ENCODE measurements at regions of chr4 and their contacts with region 1.

Region 1: DNA sequence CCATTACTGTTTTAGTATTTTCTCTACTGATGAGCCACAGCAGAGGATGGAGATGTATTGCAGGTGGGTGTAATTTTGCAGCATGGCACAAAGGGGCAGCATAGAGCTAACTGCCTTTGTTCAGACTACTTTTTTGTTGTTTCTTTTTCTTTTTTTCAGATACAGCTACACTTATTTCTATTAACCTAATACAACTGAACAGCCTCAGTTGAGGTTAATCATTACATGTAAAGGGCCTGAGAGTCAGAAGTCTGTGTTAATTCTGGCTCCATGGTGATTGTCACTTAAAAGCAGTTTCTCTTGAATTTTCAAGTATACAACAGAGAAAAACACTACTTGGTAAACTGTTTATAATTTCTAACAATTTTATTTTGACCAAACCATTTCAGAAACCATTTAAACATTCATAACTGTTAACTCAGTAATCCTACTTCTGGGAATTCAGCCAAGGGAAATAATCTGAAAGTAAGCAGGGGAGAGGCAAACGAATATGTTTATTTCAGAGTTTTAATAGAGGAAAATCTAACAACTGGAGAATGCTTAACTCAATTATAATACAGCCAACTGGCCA is 13.9 kb upstream of the PPEF2 start:
- DNase-seq: peak; percentile 57
- H3K4me3 ChIP-seq: no peak overlapping the region
- H3K27ac ChIP-seq: peak overlapping the region; percentile 12
- H3K27me3 ChIP-seq: no peaks in the 10 kb centered on the region
- CTCF ChIP-seq: peak; percentile 91

Region 2: DNA sequence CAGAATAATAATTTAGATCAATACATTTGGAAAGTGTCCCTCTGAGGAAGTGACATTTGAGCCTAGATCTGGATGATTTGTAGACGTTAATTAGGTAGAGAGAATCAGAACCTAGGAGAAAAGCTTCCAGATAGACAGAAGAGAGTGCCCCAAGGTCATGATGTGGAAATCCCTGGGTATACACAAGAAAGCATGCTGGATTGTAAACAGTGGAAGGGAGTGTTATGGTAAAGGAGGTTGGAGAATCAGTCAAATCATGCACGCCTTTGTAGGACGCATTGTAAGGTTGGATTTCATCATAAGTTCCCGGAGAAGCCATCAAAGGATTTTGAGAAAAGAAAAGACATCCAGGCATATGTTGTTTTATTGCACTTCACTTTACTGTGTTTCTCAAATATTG is 827.0 kb before region 1 on chr4:
- CTCF ChIA-PET with region 1: no interaction called
- POLR2A ChIA-PET with region 1: no interaction called
- DNase-seq: no peak
- H3K4me3 ChIP-seq: no peak overlapping the region
- H3K27ac ChIP-seq: no peak overlapping the region
- H3K27me3 ChIP-seq: no peaks in the 10 kb centered on the region
- CTCF ChIP-seq: no peak

Region 3: DNA sequence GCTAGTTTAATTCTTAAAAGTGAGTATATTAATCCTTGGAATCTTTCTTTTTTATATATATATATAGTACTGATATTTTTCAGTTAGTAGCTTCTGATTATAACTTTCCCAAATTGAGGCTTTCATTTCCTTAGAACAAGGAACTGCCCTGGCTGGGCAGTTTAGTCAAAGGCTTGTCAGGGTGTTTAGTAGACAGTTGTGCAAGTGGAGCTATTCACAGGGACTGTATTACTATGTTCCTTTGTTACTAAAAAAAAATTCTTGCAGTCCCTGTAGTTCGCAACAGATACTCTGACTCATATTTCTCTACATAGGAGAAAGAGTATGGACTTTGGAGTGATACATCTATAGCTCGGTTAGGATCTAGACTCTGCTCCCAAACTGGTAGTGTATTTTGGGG is 171.0 kb before region 1 on chr4:
- CTCF ChIA-PET with region 1: no interaction called
- POLR2A ChIA-PET with region 1: no interaction called
- DNase-seq: peak; percentile 29
- H3K4me3 ChIP-seq: no peak overlapping the region
- H3K27ac ChIP-seq: no peak overlapping the region
- H3K27me3 ChIP-seq: no peaks in the 10 kb centered on the region
- CTCF ChIP-seq: no peak

Region 4: DNA sequence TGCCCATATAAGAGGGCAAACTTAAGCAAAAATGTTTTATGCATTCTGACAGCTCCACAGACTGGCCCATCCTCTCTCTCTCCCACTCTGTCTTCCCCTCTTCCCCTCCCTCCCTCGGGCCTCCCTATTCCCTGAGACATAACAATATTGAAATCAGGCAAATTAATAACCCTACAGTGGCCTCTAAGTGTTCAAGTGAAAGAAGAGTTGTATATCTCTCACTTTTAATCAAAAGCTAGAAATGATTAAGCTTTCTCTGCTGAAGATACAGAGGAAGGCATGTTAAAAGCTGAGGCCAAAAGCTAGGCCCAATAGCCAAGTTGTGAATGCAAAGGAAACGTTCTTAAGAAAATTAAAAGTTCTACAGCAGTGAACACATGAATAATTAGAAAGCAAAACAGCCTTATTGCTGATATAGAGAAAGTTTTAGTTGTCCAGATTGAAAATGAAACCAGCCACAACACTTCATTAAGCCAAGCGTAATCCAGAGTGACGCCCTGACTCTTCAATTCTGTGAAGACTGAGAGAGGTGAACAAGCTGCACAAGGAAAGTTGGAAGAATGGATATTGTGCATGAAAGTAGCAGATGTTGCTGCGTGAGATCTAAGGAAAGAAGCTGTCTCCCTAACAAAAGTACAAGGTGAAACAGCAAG is 136.9 kb before region 1 on chr4:
- CTCF ChIA-PET with region 1: no interaction called
- POLR2A ChIA-PET with region 1: interaction called, 10 read pairs
- DNase-seq: no peak
- H3K4me3 ChIP-seq: no peak overlapping the region
- H3K27ac ChIP-seq: no peak overlapping the region
- H3K27me3 ChIP-seq: no peaks in the 10 kb centered on the region
- CTCF ChIP-seq: no peak

Region 5: DNA sequence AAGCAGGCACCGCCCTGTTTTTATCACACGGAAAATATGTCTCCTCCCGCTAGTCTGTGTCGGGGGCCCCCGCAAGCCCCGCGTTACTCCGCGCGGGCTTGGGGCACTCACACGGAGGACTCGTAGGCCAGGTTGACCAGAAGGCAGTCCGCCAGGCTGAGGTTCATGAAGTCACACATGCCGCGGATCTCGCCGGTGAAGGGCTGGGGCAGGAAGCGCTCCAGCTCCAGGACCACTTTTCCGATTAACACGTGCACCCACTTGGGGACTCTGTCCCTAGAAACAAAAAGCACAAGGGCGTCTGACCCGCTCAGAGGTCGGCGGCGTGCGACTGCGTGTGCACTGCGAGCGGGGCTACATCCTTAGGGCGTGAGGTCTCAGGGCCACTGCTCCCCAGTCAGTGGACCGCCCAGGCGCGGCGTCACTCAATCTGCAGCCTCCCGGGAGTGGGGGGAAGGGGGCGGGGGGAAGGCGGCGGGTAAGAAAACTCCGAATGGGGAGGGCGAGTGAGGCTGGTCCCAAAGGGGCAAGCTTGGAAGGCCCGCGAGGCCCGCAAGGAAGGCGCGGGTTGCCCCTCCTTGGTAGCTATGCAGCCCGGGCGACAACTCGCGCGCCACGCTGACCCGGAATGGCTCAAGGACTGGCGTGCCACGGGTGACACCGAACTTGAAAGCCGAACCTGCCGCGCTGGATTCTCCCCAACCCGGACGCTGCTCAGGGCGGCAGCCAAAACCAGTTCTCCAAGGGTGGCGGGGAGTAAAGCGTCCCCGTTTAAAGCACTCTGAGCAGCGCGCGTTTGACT is 23.9 kb after region 1 on chr4:
- CTCF ChIA-PET with region 1: interaction called, 14 read pairs
- POLR2A ChIA-PET with region 1: no interaction called
- DNase-seq: no peak
- H3K4me3 ChIP-seq: peak overlapping the region; percentile 75
- H3K27ac ChIP-seq: peak overlapping the region; percentile 21
- H3K27me3 ChIP-seq: no peaks in the 10 kb centered on the region
- CTCF ChIP-seq: no peak

Region 6: DNA sequence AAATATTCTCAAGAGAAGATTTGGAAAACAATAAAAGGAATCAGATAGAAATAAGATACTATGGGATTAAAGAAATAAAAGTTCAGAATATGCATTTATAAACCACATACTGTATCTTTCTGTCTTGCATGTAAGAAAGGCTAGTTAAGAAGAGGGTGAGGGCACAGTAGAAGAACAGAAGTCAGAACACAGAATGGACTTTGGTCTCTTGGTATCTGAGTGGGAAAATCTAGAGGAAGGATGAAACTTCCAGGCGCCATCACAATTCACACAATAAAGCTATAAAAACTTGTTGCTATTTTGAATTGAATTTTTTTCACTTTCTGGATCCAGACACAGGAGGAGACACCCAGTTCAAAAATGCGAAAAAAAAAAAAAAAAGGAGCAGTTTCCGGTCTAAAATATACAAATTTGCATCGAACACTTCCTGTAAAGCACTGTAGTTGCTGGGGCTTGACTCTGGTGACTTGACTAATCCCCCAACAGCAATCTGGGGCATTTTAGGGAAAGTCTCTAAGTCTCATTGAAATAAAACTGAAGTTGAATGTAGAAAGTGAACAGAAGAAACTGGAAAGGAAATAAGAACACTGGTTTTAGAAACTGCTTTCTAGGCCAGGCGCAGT is 32.8 kb after region 1 on chr4:
- CTCF ChIA-PET with region 1: interaction called, 11 read pairs
- POLR2A ChIA-PET with region 1: no interaction called
- DNase-seq: no peak
- H3K4me3 ChIP-seq: no peak overlapping the region
- H3K27ac ChIP-seq: no peak overlapping the region
- H3K27me3 ChIP-seq: no peaks in the 10 kb centered on the region
- CTCF ChIP-seq: no peak

Region 7: DNA sequence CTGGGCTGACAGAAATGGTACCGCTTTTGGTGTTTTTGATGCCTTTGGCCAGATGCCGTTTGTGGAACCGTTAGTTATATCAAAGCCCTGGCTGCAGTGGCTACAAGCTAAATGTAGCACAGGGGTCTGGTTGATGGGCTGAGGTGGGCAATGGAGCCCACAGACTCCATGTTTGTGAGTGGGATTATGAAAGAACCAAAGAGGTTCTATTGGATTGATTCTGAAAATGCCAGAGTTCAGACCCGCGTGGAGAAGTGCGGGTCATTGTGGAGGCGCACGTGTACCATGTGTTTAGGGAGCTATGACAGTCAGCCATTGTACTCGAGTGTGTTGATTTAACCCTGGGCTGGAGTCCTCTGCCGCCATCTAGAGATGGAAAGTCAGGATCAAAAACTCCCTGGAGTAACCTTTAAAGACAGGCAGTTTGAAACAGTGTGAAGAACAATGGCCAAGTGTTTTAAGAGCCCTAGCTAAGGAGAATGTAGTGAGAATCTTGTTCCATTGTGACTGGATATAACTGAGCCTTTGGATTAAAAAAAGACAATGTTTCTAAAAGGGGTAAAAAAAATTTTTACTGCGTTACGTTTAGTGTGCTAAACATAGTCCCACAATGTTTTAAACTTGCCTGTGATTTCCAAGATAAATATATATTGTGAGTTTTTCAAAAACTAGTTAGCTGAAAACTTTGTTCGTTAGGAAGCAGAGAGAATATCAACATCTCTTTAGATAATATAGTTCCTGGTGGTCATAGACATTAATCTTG is 171.0 kb after region 1 on chr4:
- CTCF ChIA-PET with region 1: interaction called, 12 read pairs
- POLR2A ChIA-PET with region 1: no interaction called
- DNase-seq: peak; percentile 7
- H3K4me3 ChIP-seq: no peak overlapping the region
- H3K27ac ChIP-seq: no peak overlapping the region
- H3K27me3 ChIP-seq: peaks cover 14% of the 10 kb centered on the region
- CTCF ChIP-seq: peak; percentile 77